WTC11 (cell line): ENCODE measurements at regions of chr4 and their contacts with region 1.

Region 1: GRCh38 chr4:3318561-3319021 is 25.8 kb downstream of the RGS12 start:
- DNase-seq: peak; percentile 93
- ATAC-seq: peak; percentile 99
- H3K4me3 Mint-ChIP-seq: peak overlapping the region; percentile 18; the same call in 1 of the 2 replicates
- H3K27ac Mint-ChIP-seq: peak overlapping the region; percentile 95
- H3K4me1 Mint-ChIP-seq: peaks cover 11% of the 10 kb centered on the region
- H3K27me3 Mint-ChIP-seq: no peaks in the 10 kb centered on the region
- CTCF ChIP-seq: peak; percentile 35

Region 2: GRCh38 chr4:2991243-2991642 is 327.3 kb before region 1 on chr4:
- CTCF ChIA-PET with region 1: no interaction called
- POLR2A ChIA-PET with region 1: no interaction called
- DNase-seq: no peak
- ATAC-seq: no peak
- H3K4me3 Mint-ChIP-seq: no peak overlapping the region
- H3K27ac Mint-ChIP-seq: no peak overlapping the region
- H3K4me1 Mint-ChIP-seq: no peaks in the 10 kb centered on the region
- H3K27me3 Mint-ChIP-seq: no peaks in the 10 kb centered on the region
- CTCF ChIP-seq: no peak

Region 3: DNA sequence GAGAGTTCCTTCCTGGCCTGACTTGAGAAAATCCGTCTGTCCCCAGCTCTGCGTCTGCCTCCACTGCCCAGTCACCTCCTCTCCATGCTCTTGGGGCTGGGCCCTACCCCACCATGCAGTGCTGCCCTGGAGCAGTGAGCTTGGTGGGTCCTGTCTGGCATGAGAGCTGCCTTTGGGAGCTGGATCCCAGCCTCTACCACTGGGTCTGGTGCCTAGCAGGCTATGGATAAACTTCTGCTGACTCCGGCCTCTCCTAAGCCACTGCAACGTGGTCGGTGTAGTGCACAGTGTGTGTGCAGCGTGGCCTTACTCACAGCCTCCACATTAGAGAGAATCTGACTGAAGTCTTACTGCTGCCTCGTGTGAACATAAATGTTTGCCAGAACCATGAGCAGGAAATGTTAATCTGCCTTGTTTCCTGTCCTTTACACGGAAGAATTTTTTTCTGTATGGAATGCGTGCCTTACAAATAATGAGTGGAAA is 196.5 kb before region 1 on chr4:
- CTCF ChIA-PET with region 1: no interaction called
- POLR2A ChIA-PET with region 1: no interaction called
- DNase-seq: no peak
- ATAC-seq: no peak
- H3K4me3 Mint-ChIP-seq: no peak overlapping the region
- H3K27ac Mint-ChIP-seq: peak overlapping the region; percentile 76; the same call in 1 of the 2 replicates
- H3K4me1 Mint-ChIP-seq: no peaks in the 10 kb centered on the region
- H3K27me3 Mint-ChIP-seq: no peaks in the 10 kb centered on the region
- CTCF ChIP-seq: no peak

Region 4: DNA sequence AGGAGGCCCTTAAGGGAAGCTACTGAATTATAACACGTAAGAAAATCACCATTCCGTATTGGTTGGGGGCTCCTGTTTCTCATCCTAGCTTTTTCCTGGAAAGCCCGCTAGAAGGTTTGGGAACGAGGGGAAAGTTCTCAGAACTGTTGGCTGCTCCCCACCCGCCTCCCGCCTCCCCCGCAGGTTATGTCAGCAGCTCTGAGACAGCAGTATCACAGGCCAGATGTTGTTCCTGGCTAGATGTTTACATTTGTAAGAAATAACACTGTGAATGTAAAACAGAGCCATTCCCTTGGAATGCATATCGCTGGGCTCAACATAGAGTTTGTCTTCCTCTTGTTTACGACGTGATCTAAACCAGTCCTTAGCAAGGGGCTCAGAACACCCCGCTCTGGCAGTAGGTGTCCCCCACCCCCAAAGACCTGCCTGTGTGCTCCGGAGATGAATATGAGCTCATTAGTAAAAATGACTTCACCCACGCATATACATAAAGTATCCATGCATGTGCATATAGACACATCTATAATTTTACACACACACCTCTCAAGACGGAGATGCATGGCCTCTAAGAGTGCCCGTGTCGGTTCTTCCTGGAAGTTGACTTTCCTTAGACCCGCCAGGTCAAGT is 76.6 kb before region 1 on chr4:
- CTCF ChIA-PET with region 1: interaction called, 25 read pairs
- POLR2A ChIA-PET with region 1: no interaction called
- DNase-seq: no peak
- ATAC-seq: no peak
- H3K4me3 Mint-ChIP-seq: no peak overlapping the region
- H3K27ac Mint-ChIP-seq: peak overlapping the region; percentile 17
- H3K4me1 Mint-ChIP-seq: peaks cover 36% of the 10 kb centered on the region
- H3K27me3 Mint-ChIP-seq: peaks cover 5% of the 10 kb centered on the region
- CTCF ChIP-seq: no peak

Region 5: GRCh38 chr4:3286335-3287175 is 32.0 kb before region 1 on chr4:
- CTCF ChIA-PET with region 1: interaction called, 45 read pairs
- POLR2A ChIA-PET with region 1: no interaction called
- DNase-seq: peak; percentile 11
- ATAC-seq: no peak
- H3K4me3 Mint-ChIP-seq: no peak overlapping the region
- H3K27ac Mint-ChIP-seq: no peak overlapping the region
- H3K4me1 Mint-ChIP-seq: peaks cover 3% of the 10 kb centered on the region
- H3K27me3 Mint-ChIP-seq: peaks cover 22% of the 10 kb centered on the region
- CTCF ChIP-seq: no peak

Region 6: GRCh38 chr4:3305598-3306371 is 12.8 kb before region 1 on chr4:
- CTCF ChIA-PET with region 1: interaction called, 85 read pairs
- POLR2A ChIA-PET with region 1: no interaction called
- DNase-seq: peak; percentile 8
- ATAC-seq: no peak
- H3K4me3 Mint-ChIP-seq: no peak overlapping the region
- H3K27ac Mint-ChIP-seq: peak overlapping the region; percentile 8; the same call in 1 of the 2 replicates
- H3K4me1 Mint-ChIP-seq: peaks cover 52% of the 10 kb centered on the region
- H3K27me3 Mint-ChIP-seq: no peaks in the 10 kb centered on the region
- CTCF ChIP-seq: no peak

Region 7: DNA sequence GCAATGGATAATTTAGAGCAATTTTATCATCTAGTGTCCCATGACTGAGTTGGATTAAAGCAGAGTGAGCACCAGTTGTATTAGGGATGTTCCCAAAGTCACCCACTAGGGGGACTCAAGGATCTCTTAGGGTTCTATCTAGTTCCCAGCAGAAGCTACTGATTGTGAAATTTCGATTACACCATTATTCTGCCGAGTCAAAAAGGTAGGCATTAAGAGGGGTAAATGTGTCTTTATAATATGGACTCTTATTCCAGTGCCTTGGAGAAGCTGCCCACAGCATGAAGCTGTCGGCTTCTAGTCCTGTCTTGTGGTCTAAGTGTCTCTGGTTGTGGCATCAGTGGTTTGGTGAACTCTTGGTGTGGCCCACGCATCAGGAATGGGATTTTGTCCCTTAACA is 27.6 kb after region 1 on chr4:
- CTCF ChIA-PET with region 1: interaction called, 23 read pairs
- POLR2A ChIA-PET with region 1: no interaction called
- DNase-seq: no peak
- ATAC-seq: peak; percentile 75
- H3K4me3 Mint-ChIP-seq: no peak overlapping the region
- H3K27ac Mint-ChIP-seq: peak overlapping the region; percentile 72; the same call in 1 of the 2 replicates
- H3K4me1 Mint-ChIP-seq: peaks cover 32% of the 10 kb centered on the region
- H3K27me3 Mint-ChIP-seq: no peaks in the 10 kb centered on the region
- CTCF ChIP-seq: peak; percentile 73

Region 8: DNA sequence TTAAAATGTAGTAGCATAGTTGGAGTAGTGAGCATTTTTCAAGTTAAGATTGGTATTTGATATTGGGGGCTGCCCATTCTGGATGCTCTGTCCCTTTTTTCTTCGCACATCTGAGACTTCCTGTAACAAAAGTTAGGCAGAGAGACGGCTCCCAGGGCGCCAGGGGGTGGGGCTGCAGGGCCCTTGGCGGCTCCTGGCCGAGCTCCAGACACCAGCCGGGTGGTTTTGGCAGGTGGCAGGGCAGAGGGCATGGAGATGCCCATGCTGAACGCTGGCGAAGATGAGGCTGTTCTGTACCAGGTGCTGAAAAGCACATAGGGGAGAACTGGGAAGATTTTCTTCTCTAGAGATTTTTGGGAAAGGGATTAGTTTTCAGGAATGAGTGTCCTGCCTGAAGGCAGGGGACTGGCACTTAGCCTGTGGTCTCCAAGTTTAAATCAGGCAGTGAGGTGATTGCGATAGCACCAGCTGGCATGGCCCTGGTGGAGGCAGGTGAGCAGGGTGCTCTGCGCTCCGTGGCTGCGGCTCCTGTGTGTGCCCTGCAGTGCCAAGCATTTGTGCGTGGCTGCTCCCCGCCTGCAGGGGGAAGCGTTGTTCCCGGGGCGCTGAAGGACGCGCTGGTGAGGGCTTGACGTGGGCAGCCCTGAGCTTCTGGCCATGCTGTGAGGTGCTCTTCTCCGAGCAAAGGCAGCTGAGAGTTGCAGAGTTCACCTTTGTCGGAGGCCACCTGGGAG is 99.6 kb after region 1 on chr4:
- CTCF ChIA-PET with region 1: interaction called, 10 read pairs
- POLR2A ChIA-PET with region 1: no interaction called
- DNase-seq: peak; percentile 63
- ATAC-seq: peak; percentile 74
- H3K4me3 Mint-ChIP-seq: no peak overlapping the region
- H3K27ac Mint-ChIP-seq: peak overlapping the region; percentile 60; the same call in 1 of the 2 replicates
- H3K4me1 Mint-ChIP-seq: no peaks in the 10 kb centered on the region
- H3K27me3 Mint-ChIP-seq: no peaks in the 10 kb centered on the region
- CTCF ChIP-seq: peak; percentile 33; the same call in 1 of the 2 replicates

Region 9: GRCh38 chr4:3442959-3443749 is 124.6 kb after region 1 on chr4:
- CTCF ChIA-PET with region 1: interaction called, 42 read pairs
- POLR2A ChIA-PET with region 1: no interaction called
- DNase-seq: peak; percentile 77
- ATAC-seq: peak; percentile 82
- H3K4me3 Mint-ChIP-seq: no peak overlapping the region
- H3K27ac Mint-ChIP-seq: no peak overlapping the region
- H3K4me1 Mint-ChIP-seq: no peaks in the 10 kb centered on the region
- H3K27me3 Mint-ChIP-seq: no peaks in the 10 kb centered on the region
- CTCF ChIP-seq: peak; percentile 100